Activated CD4-positive, alpha-beta memory T cell treated with anti-CD3 and anti-CD28 coated beads for 36 hours (primary cell): ENCODE measurements at regions of chr7 and their contacts with region 1.

Region 1: GRCh38 chr7:39589323-39590111 is 23.3 kb downstream of the YAE1 start:
- DNase-seq: peak; percentile 85
- H3K4me3 Mint-ChIP-seq: peak overlapping the region; percentile 20
- H3K27ac Mint-ChIP-seq: peak overlapping the region; percentile 34
- H3K4me1 Mint-ChIP-seq: peaks cover 38% of the 10 kb centered on the region
- H3K27me3 Mint-ChIP-seq: no peaks in the 10 kb centered on the region

Region 2: DNA sequence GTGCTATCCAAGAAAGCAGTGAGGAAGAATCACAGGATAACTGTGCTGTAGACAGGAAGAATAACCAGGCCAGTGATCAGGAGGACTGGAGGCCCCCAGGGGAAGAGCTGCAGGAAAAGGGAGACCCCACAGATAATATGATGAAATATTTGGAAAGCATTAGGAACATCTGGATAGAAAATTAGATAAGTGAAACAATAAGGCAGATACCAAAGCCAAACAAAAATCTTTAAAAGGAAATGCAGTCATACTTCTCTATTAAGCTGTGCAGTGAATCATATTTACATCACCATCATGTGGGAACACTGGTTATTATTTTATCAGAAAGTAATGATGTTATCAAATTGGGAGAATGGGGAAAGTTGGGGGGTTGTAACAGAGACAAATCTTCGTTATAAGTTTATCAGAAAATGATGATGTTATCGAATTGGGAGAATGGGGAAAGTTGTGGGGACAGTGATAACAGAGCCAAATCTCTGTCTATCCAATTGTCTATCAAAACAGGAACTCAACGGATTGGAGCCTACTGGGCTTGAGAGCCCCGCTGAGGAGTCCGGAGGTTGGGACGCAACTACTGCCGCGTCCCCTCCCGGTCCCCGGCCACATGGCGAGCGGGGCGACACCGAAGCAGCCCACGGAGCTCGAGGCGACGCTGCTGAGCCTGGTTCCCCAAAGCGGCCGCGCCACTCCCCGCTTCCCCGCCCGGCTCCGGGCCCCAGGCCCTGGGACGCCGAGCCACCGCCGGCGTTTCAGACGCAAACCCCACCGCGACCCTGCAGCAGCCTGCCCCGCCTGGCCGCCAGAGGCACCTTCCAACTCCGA is 19.8 kb after region 1 on chr7:
- CTCF ChIA-PET with region 1: no interaction called
- POLR2A ChIA-PET with region 1: no interaction called
- intact Hi-C with region 1: loop called (anchors 2 kb)
- DNase-seq: peak; percentile 21
- H3K4me3 Mint-ChIP-seq: peak overlapping the region; percentile 31
- H3K27ac Mint-ChIP-seq: peak overlapping the region; percentile 49
- H3K4me1 Mint-ChIP-seq: peaks cover 41% of the 10 kb centered on the region
- H3K27me3 Mint-ChIP-seq: peaks cover 8% of the 10 kb centered on the region

Region 3: DNA sequence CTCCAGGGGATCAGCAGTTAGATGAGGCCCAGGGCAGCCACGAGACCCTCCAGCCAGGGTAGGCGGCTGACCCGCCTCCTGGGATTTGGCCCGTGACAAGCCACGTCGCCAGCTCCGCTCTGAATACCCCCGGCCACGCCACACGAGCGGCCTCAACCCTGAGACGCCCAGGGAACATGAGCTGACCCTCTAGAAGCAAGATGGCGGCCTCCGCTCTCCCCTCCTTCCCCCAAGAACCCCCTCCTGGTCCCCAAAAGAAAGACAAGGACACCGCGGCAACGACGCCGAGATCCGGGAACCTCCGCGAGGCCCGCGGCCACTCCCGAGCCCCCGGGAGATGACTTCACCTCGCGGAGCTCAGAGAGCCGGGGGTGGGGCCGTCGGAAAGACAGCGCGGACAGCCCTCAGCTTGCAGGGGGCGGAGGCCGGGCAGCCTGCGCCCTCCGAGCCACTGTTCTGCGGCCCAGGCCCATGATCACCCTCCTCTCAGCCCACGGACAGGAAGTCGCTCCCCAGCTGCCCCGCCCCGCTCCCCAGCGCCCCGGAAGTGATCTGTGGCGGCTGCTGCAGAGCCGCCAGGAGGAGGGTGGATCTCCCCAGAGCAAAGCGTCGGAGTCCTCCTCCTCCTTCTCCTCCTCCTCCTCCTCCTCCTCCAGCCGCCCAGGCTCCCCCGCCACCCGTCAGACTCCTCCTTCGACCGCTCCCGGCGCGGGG is 33.7 kb after region 1 on chr7 and contains the start of gene RALA:
- CTCF ChIA-PET with region 1: interaction called, 4 read pairs
- POLR2A ChIA-PET with region 1: interaction called, 7 read pairs
- intact Hi-C with region 1: loop called (anchors 1 kb)
- DNase-seq: peak; percentile 94
- H3K4me3 Mint-ChIP-seq: peak within 1 kb of the TSS; percentile 90
- H3K27ac Mint-ChIP-seq: peak within 1 kb of the TSS; percentile 87
- H3K4me1 Mint-ChIP-seq: peaks cover 45% of the 10 kb centered on the region
- H3K27me3 Mint-ChIP-seq: no peaks in the 10 kb centered on the region
- total RNA-seq, gene RALA: 27.1 to 31.4 TPM

Region 4: DNA sequence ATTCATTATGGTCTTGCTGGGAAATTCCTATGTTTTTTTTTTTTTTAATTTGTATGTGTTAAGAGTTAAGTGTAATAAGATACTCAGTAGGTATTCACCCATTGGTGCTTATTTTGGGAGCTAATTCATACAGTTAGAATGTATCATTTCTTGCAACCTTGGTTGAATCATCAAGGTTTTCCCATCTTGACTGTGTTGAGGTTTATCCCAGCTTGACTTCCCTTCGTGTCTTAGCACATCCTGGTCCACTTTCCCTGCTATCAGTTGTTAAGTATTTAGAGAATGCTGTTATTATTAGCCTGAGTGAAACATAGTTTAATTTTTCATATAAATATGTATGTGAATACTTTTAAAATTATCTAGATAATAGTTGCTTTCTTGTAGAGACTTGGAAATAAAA is 54.7 kb after region 1 on chr7:
- CTCF ChIA-PET with region 1: no interaction called
- POLR2A ChIA-PET with region 1: no interaction called
- intact Hi-C with region 1: no loop called
- DNase-seq: no peak
- H3K4me3 Mint-ChIP-seq: no peak overlapping the region
- H3K27ac Mint-ChIP-seq: no peak overlapping the region
- H3K4me1 Mint-ChIP-seq: peaks cover 65% of the 10 kb centered on the region
- H3K27me3 Mint-ChIP-seq: no peaks in the 10 kb centered on the region

Region 5: DNA sequence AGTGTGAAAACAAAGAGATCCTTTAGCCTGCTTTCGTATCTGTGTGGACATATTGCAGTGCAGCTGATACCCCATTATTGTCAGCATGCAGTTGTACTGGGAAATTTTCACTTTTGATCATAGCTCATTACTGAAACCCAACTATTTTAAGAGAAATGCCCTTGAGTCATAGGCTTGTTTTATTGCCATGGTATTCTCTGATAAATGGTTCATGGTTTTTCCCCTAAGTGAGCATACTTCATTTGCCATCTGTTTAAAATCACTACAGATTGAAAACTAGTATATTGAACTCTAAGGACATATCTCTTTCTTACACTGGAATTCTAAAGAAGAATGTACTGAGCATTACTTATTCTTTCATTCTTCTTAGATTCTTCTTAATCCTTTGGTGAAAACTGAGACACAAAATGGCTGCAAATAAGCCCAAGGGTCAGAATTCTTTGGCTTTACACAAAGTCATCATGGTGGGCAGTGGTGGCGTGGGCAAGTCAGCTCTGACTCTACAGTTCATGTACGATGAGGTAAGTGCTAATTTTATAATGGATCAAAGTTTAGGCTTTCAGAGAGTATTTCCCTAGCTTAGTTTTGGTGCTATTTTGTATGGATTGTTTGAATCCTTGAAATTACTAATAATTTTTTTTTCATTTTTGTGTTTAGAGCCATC is 96.9 kb after region 1 on chr7:
- CTCF ChIA-PET with region 1: interaction called, 3 read pairs
- POLR2A ChIA-PET with region 1: no interaction called
- intact Hi-C with region 1: loop called (anchors 1 kb)
- DNase-seq: no peak
- H3K4me3 Mint-ChIP-seq: no peak overlapping the region
- H3K27ac Mint-ChIP-seq: peak overlapping the region; percentile 54
- H3K4me1 Mint-ChIP-seq: peaks cover 37% of the 10 kb centered on the region
- H3K27me3 Mint-ChIP-seq: no peaks in the 10 kb centered on the region